ENCODE measurements at regions of chr1 and their contacts with region 1.

Region 1: GRCh38 chr1:229479660-229480399 is 28.3 kb downstream of the NUP133 start:
- DNase-seq: no peak
- H3K4me3 ChIP-seq: no peak overlapping the region
- CTCF ChIP-seq: no peak

Region 2: GRCh38 chr1:228664399-228664914 is 815.4 kb before region 1 on chr1:
- CTCF ChIA-PET with region 1: interaction called, 14 read pairs
- POLR2A ChIA-PET with region 1: no interaction called
- DNase-seq: no peak
- H3K4me3 ChIP-seq: no peak overlapping the region
- CTCF ChIP-seq: peak; percentile 67

Region 3: DNA sequence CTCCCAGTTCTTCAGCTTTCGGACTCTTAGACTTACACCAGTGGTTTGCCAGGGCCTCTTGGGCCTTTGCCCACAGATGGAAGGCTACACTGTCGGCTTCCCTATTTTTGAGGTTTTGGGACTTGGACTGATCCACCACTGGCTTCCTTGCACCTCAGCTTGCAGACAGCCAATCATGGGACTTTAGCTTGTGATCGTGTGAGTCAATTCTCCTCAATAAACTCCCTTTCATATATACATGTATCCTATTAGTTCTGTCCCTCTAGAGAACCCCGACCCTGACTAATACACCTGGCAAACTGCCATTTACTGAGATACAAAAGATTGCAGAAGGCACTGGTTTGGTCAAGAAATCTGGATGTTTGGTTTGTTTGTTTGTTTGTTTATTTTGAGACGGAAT is 215.3 kb before region 1 on chr1:
- CTCF ChIA-PET with region 1: interaction called, 231 read pairs
- POLR2A ChIA-PET with region 1: no interaction called
- DNase-seq: no peak
- H3K4me3 ChIP-seq: no peak overlapping the region
- CTCF ChIP-seq: no peak

Region 4: GRCh38 chr1:229440851-229441537 is 38.8 kb before region 1 on chr1:
- CTCF ChIA-PET with region 1: interaction called, 11 read pairs
- POLR2A ChIA-PET with region 1: no interaction called
- DNase-seq: peak; percentile 45
- H3K4me3 ChIP-seq: no peak overlapping the region
- CTCF ChIP-seq: no peak

Region 5: GRCh38 chr1:229495782-229496181 is 16.0 kb after region 1 on chr1:
- CTCF ChIA-PET with region 1: interaction called, 38 read pairs
- POLR2A ChIA-PET with region 1: no interaction called
- DNase-seq: no peak
- H3K4me3 ChIP-seq: no peak overlapping the region
- CTCF ChIP-seq: no peak

Region 6: GRCh38 chr1:229507951-229508822 is 28.4 kb after region 1 on chr1 and contains the start of gene NUP133:
- CTCF ChIA-PET with region 1: interaction called, 16 read pairs
- POLR2A ChIA-PET with region 1: no interaction called
- DNase-seq: peak; percentile 82
- H3K4me3 ChIP-seq: peak within 1 kb of the TSS; percentile 80
- CTCF ChIP-seq: no peak

Region 7: GRCh38 chr1:229514578-229515275 is 34.9 kb after region 1 on chr1:
- CTCF ChIA-PET with region 1: interaction called, 13 read pairs
- POLR2A ChIA-PET with region 1: no interaction called
- DNase-seq: peak; percentile 47
- H3K4me3 ChIP-seq: no peak overlapping the region
- CTCF ChIP-seq: peak; percentile 83

Measured in AG04449 (cell line).